Activated naive CD4-positive, alpha-beta T cell treated with anti-CD3 and anti-CD28 coated beads for 36 hours (primary cell): ENCODE measurements at regions of chr5 and their contacts with region 1.

Region 1: DNA sequence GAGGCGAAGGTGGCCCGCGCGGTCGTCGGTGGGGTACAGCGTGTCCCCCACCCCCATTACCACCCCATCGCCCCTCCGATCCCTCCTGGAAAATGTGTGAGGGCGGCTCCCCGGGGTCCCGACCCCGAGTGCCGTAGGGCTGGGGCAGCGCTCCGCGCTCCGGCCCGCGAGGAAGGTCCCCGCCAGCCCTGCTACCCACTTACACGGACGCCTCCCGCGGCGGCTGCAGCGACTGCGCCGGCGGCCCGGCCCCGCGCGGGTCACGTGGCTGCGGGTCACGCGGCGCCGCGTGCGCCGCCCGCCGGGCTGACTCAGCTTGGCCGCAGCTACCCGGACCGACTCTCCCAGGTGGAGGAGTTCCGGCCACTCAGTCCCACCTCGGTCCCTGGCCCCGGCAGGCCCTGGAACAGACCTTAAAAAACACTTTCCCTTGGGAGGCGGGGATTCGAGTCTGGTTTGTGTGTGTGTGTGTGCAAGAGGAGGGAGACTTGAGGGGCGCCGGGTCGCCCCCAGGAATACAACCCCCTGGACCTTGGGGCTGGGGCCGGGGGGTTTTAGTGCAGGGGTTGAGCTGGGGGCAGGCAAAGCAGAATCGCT is at the start of gene GNPDA1:
- DNase-seq: peak; percentile 69
- H3K4me3 Mint-ChIP-seq: peak within 1 kb of the TSS; percentile 94
- H3K27ac Mint-ChIP-seq: peak within 1 kb of the TSS; percentile 94
- H3K4me1 Mint-ChIP-seq: peaks cover 76% of the 10 kb centered on the region
- H3K27me3 Mint-ChIP-seq: no peaks in the 10 kb centered on the region
- total RNA-seq, gene GNPDA1: 250 to 259 TPM

Region 2: DNA sequence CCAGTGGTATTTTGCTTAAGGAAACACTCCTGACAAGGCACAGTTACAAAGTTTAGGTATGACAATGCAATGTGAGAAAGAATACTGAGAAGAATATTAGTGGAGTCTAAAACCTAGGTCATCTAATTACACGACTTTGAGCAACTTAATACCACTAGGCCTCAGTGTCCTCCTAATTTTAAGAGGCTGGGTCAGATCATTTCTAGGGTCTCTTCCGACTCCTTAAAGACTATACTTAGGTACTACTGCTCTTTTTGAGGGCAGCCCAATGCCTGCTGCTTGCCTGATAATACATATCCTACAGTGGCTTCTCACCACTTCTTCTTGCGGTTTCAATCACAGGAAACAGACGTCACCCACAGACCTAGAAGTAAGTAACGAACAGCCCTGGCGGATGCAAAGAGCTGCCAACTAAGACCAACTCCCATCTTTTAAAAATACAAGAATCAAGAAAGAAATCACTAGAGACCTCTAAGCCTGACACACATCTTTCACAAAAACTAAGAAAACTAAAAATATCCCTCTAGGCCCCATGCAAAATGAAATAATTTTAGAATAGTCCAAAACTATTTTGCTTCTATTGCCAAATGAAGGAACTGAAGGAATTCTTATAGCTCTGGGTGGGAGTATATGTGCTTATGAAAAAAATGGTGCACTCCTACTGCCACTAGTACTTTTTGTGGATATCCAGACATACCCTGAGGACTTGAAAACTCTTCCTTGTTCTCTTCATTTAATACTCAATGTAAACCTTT is 407.2 kb before region 1 on chr5:
- CTCF ChIA-PET with region 1: no interaction called
- intact Hi-C with region 1: loop called (anchors 5 kb)
- DNase-seq: peak; percentile 83
- H3K4me3 Mint-ChIP-seq: peak overlapping the region; percentile 32
- H3K27ac Mint-ChIP-seq: peak overlapping the region; percentile 90
- H3K4me1 Mint-ChIP-seq: peaks cover 87% of the 10 kb centered on the region
- H3K27me3 Mint-ChIP-seq: no peaks in the 10 kb centered on the region

Region 3: GRCh38 chr5:141960449-141961202 is 52.3 kb before region 1 on chr5:
- CTCF ChIA-PET with region 1: interaction called, 16 read pairs
- intact Hi-C with region 1: no loop called
- DNase-seq: peak; percentile 97
- H3K4me3 Mint-ChIP-seq: peak overlapping the region; percentile 33
- H3K27ac Mint-ChIP-seq: peak overlapping the region; percentile 74
- H3K4me1 Mint-ChIP-seq: peaks cover 38% of the 10 kb centered on the region
- H3K27me3 Mint-ChIP-seq: no peaks in the 10 kb centered on the region

Region 4: GRCh38 chr5:142000703-142001484 is 12.0 kb before region 1 on chr5:
- CTCF ChIA-PET with region 1: interaction called, 137 read pairs
- intact Hi-C with region 1: loop called (anchors 2 kb)
- DNase-seq: peak; percentile 66
- H3K4me3 Mint-ChIP-seq: no peak overlapping the region
- H3K27ac Mint-ChIP-seq: peak overlapping the region; percentile 100
- H3K4me1 Mint-ChIP-seq: peaks cover 53% of the 10 kb centered on the region
- H3K27me3 Mint-ChIP-seq: no peaks in the 10 kb centered on the region

Region 5: DNA sequence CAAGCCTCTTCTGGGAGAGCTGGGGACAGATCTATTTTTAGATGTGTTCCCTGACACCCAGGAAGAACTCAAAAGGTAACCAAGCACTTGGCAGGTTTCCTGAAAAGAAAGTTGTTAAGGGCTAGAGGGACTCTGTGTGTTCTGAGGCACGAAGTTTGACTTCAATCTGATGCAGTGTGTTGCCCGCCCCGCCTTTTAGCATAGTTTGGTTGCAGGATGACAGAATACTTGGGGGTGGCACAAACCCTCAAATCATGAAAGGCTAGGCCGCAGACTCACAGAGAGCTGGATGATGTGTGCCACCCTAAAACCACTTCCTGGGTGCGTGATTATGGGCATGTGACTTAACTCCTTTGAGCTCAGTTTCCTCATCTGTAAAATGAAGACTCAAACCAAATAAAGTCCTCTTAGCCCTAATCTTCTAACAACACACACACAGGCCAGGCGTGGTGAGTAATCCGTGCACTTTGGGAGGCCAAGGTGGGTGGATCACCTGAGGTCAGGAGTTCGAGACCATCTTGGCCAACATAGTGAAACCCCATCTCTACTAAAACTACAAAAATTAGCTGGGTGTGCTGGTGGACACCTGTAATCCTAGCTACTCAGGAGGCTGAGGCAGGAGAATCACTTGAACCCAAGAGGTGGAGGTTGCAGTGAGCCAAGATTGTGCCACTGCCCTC is 82.9 kb after region 1 on chr5:
- CTCF ChIA-PET with region 1: interaction called, 36 read pairs
- intact Hi-C with region 1: loop called (anchors 1 kb)
- DNase-seq: peak; percentile 95
- H3K4me3 Mint-ChIP-seq: peak overlapping the region; percentile 48
- H3K27ac Mint-ChIP-seq: peak overlapping the region; percentile 96
- H3K4me1 Mint-ChIP-seq: peaks cover 81% of the 10 kb centered on the region
- H3K27me3 Mint-ChIP-seq: no peaks in the 10 kb centered on the region

Region 6: DNA sequence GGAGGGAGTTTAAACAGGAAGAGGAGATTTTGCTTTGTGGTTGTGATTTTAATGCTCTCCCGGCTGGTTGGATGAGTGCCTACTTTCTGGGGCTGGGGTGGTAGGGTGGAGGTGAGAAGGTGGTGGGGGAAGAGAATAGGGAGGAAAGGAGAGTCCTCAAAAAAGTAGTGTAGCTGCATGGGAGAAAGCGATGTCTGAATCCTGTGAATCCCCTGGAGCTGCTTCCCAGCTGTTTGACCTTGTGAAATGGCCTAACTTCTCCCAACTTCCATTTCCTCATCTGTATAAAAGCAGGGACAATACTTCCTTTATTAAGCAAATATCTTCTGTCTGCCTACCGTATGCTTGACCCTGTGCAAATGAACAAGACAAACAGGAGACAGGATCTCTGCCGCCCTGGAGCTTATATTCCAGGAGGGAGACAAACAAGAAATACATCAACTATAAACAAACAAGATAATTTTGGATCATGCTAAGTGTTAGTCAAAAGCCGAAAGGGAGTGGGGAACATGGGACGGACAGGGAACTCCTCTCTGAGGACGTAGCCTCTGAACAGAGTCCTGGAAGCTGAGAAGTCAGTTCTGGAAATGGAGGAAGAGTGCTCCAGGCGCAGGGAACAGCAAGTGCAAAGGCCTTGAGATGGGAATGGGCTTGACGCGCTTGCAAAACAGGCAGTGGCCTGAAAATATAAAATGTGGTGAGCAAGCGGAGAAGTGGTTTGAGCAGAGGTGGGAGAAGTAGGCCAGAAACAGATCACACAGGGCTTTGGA is 208.4 kb after region 1 on chr5:
- CTCF ChIA-PET with region 1: interaction called, 6 read pairs
- intact Hi-C with region 1: loop called (anchors 2 kb)
- DNase-seq: no peak
- H3K4me3 Mint-ChIP-seq: no peak overlapping the region
- H3K27ac Mint-ChIP-seq: no peak overlapping the region
- H3K4me1 Mint-ChIP-seq: peaks cover 32% of the 10 kb centered on the region
- H3K27me3 Mint-ChIP-seq: peaks cover 2% of the 10 kb centered on the region

Region 7: DNA sequence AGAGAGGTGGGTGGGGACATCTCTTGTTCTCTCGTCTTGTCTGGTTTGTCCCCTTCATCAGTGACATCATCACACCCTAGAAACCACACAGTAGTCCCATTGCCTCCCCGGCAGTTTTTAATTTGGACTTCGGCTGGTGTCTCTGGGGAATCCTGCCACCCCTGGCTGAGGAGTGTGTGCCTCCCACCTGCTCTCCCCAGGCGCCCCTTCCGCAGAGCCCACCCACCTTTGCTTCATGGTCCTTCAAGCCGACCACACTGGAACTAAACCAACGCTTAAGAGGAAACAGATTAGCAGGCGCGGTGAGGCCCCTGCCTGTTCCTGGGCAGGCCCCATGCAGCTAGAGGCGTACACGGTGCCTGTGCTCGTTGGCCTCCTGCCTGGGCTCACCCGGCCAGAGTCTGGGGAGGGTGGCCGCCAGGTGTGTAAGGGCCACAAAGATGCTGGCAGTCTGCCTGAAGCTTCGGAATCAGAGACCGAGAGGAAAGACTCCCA is 419.5 kb after region 1 on chr5:
- CTCF ChIA-PET with region 1: no interaction called
- intact Hi-C with region 1: loop called (anchors 5 kb)
- DNase-seq: peak; percentile 56
- H3K4me3 Mint-ChIP-seq: peak overlapping the region; percentile 16
- H3K27ac Mint-ChIP-seq: peak overlapping the region; percentile 71
- H3K4me1 Mint-ChIP-seq: peaks cover 26% of the 10 kb centered on the region
- H3K27me3 Mint-ChIP-seq: no peaks in the 10 kb centered on the region